Calu3 (cell line): ENCODE measurements at regions of chr1 and their contacts with region 1.

Region 1: GRCh38 chr1:53393325-53393792 is 65.5 kb upstream of the LRP8 start:
- DNase-seq: peak; percentile 87
- H3K4me3 Mint-ChIP-seq: no peak overlapping the region
- H3K27ac Mint-ChIP-seq: no peak overlapping the region
- H3K4me1 Mint-ChIP-seq: no peaks in the 10 kb centered on the region
- H3K27me3 Mint-ChIP-seq: peaks cover 47% of the 10 kb centered on the region
- CTCF ChIP-seq: peak; percentile 88

Region 2: GRCh38 chr1:52629325-52629643 is 764.1 kb before region 1 on chr1:
- CTCF ChIA-PET with region 1: no interaction called
- intact Hi-C with region 1: no loop called
- DNase-seq: peak; percentile 8
- H3K4me3 Mint-ChIP-seq: no peak overlapping the region
- H3K27ac Mint-ChIP-seq: no peak overlapping the region
- H3K4me1 Mint-ChIP-seq: no peaks in the 10 kb centered on the region
- H3K27me3 Mint-ChIP-seq: peaks cover 30% of the 10 kb centered on the region
- CTCF ChIP-seq: no peak

Region 3: GRCh38 chr1:53278201-53278725 is 115.1 kb before region 1 on chr1:
- CTCF ChIA-PET with region 1: interaction called, 30 read pairs
- intact Hi-C with region 1: loop called (anchors 1 kb)
- DNase-seq: peak; percentile 73
- H3K4me3 Mint-ChIP-seq: no peak overlapping the region
- H3K27ac Mint-ChIP-seq: no peak overlapping the region
- H3K4me1 Mint-ChIP-seq: no peaks in the 10 kb centered on the region
- H3K27me3 Mint-ChIP-seq: no peaks in the 10 kb centered on the region
- CTCF ChIP-seq: peak; percentile 83

Region 4: DNA sequence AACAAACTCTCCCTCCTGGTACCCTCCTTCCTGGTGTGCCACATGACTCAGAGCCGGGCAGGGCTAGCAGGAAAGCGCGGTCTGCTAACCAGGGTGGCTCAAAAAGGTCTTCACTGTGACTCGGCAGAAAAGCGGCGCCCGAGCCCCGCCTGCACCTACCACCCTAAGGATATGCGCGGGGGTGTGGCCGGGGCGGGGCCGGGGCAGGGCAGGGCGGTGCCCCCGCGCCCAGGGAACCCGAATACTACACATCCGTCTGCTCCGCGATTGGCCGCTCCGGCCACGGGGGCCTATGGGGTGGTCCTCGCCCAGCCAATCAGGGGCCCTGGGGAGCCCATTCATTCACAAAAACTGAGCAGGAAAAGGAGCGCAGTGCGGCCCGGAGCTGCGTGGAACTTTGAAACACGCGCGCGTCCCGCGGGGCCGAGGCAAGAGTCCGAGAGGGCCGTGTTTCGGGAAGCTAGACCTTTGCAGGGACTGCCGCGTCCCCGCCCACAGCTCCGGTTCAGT is 67.2 kb before region 1 on chr1:
- CTCF ChIA-PET with region 1: interaction called, 7 read pairs
- intact Hi-C with region 1: loop called (anchors 2 kb)
- DNase-seq: peak; percentile 98
- H3K4me3 Mint-ChIP-seq: peak overlapping the region; percentile 99
- H3K27ac Mint-ChIP-seq: peak overlapping the region; percentile 92
- H3K4me1 Mint-ChIP-seq: peaks cover 27% of the 10 kb centered on the region
- H3K27me3 Mint-ChIP-seq: no peaks in the 10 kb centered on the region
- CTCF ChIP-seq: no peak